ENCODE measurements at regions of chr10 and their contacts with region 1.

Region 1: DNA sequence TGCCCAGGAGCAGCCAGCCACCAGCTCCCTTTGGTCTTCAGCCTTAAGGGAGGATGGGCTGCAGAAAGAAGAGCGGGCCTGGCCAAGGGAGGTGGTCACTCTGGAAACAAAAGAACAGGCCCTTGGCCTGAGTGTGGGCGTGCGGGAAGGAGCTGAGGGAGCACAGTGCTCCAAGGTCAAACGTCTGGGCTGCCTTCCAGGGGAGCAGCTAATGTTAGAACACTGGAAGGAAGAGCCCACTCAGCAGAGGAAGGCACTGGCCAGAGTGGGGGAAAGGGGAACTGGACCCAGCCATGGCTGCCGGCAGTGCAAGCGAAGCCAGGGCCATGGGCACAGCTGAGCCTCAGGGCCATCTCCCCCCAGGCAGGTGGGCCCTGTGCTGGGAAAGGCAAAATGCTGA is 42.7 kb downstream of the FAM53B start:
- DNase-seq: peak; percentile 96
- H3K4me3 ChIP-seq: no peak overlapping the region
- H3K27ac ChIP-seq: peak overlapping the region; percentile 46
- H3K4me1 ChIP-seq: peaks cover 19% of the 10 kb centered on the region
- H3K27me3 ChIP-seq: no peaks in the 10 kb centered on the region
- CTCF ChIP-seq: no peak
- POLR2A ChIP-seq: no peak

Region 2: DNA sequence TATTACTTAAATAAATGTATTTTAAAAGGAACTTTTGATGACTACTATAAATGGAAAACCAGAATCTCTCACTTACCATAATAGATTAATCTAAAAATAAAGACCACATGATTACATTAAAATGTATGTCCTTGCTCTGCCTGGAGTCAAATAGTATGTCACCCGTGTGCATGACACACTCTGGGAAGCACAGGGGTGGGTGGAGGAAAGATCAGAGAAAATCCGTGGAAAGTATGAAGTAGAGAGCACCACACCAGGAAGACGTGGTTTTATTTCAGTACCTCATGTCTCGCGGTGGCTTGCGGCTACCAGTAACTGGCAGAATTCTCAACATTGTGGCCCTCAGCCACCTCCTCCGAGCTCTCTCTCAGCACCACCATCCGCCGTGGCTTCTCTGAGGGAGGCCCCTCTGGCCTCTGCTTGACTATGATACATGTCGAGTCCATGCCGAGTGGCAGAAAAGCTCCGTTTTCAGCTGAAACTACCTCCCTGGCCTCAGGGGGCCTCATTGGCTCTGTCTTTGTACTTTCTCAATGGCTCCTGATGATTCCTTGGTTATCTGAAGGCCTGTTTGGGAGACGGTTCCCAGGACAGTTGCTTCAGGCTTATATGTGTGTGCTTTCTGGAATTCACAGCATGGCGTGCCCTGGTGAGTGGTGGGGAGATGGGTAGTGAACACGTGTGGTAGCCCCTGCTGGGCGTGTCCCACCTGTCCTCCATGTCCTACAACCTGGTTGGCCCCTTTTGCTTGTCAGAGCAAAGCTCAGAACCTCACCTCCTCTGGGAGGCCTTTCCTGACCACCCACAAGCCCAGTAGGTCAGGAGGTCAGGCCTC is 190.0 kb before region 1 on chr10:
- CTCF ChIA-PET with region 1: no interaction called
- POLR2A ChIA-PET with region 1: no interaction called
- dilution Hi-C with region 1: no loop called
- intact Hi-C with region 1: no loop called
- DNase-seq: no peak
- H3K4me3 ChIP-seq: no peak overlapping the region
- H3K27ac ChIP-seq: no peak overlapping the region
- H3K4me1 ChIP-seq: no peaks in the 10 kb centered on the region
- H3K27me3 ChIP-seq: no peaks in the 10 kb centered on the region
- CTCF ChIP-seq: no peak
- POLR2A ChIP-seq: no peak

Region 3: GRCh38 chr10:124647421-124648130 is 53.9 kb before region 1 on chr10:
- CTCF ChIA-PET with region 1: interaction called, 5 read pairs
- POLR2A ChIA-PET with region 1: no interaction called
- dilution Hi-C with region 1: no loop called
- intact Hi-C with region 1: loop called (anchors 2 kb)
- DNase-seq: peak; percentile 46
- H3K4me3 ChIP-seq: no peak overlapping the region
- H3K27ac ChIP-seq: peak overlapping the region; percentile 36
- H3K4me1 ChIP-seq: peaks cover 35% of the 10 kb centered on the region
- H3K27me3 ChIP-seq: no peaks in the 10 kb centered on the region
- CTCF ChIP-seq: peak; percentile 25
- POLR2A ChIP-seq: no peak

Region 4: GRCh38 chr10:124688889-124689670 is 12.4 kb before region 1 on chr10:
- CTCF ChIA-PET with region 1: interaction called, 10 read pairs
- POLR2A ChIA-PET with region 1: no interaction called
- dilution Hi-C with region 1: no loop called
- intact Hi-C with region 1: loop called (anchors 2 kb)
- DNase-seq: no peak
- H3K4me3 ChIP-seq: no peak overlapping the region
- H3K27ac ChIP-seq: no peak overlapping the region
- H3K4me1 ChIP-seq: peaks cover 7% of the 10 kb centered on the region
- H3K27me3 ChIP-seq: no peaks in the 10 kb centered on the region
- CTCF ChIP-seq: no peak
- POLR2A ChIP-seq: no peak

Region 5: DNA sequence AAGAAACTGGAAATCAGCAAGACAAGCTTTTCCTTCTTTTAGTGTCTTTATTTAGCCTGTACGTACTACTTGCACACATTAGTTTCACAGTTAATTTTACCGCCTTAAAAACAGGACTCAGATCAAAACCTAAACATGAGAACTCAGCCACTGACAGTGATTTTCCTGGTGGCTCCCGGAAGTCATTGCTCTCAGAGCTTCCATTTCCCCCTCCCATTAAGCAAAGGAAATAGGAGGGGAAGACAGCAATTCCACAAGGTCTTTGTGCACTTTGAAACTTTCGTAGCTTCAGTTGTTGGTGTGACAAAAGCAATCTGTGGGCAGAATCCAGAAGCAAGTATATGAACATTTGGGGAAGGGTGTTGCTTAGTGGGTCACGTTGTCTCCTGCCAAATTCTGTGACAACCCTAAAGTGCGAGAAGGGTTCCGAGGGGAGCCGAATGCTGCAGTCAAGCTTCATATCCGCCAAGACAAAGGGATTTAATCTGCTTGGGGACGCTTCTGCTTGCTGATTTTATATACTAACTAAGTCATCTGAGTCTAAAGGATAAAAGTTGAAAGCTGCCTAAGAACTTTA is 12.3 kb after region 1 on chr10:
- CTCF ChIA-PET with region 1: interaction called, 38 read pairs
- POLR2A ChIA-PET with region 1: interaction called, 3 read pairs
- dilution Hi-C with region 1: no loop called
- intact Hi-C with region 1: no loop called
- DNase-seq: no peak
- H3K4me3 ChIP-seq: no peak overlapping the region
- H3K27ac ChIP-seq: no peak overlapping the region
- H3K4me1 ChIP-seq: peaks cover 10% of the 10 kb centered on the region
- H3K27me3 ChIP-seq: no peaks in the 10 kb centered on the region
- CTCF ChIP-seq: no peak
- POLR2A ChIP-seq: no peak

Region 6: GRCh38 chr10:124719213-124719851 is 17.9 kb after region 1 on chr10:
- CTCF ChIA-PET with region 1: interaction called, 38 read pairs
- POLR2A ChIA-PET with region 1: interaction called, 3 read pairs
- dilution Hi-C with region 1: no loop called
- intact Hi-C with region 1: loop called (anchors 1 kb)
- DNase-seq: peak; percentile 84
- H3K4me3 ChIP-seq: no peak overlapping the region
- H3K27ac ChIP-seq: no peak overlapping the region
- H3K4me1 ChIP-seq: peaks cover 26% of the 10 kb centered on the region
- H3K27me3 ChIP-seq: no peaks in the 10 kb centered on the region
- CTCF ChIP-seq: peak; percentile 61 to 74
- POLR2A ChIP-seq: no peak

Measured in endothelial cell of umbilical vein (primary cell).